ENCODE measurements at regions of chr14 and their contacts with region 1.

Region 1: GRCh38 chr14:39266871-39267591 is 33.3 kb downstream of the MIA2 start:
- DNase-seq: peak; percentile 85 to 90
- ATAC-seq: peak; percentile 90 to 94 (median 91)
- H3K4me3 ChIP-seq: peak overlapping the region; percentile 95
- H3K27ac ChIP-seq: peak overlapping the region; percentile 100
- H3K4me1 ChIP-seq: peaks cover 31% of the 10 kb centered on the region
- H3K27me3 ChIP-seq: no peaks in the 10 kb centered on the region
- CTCF ChIP-seq: no peak

Region 2: GRCh38 chr14:39174560-39175444 is 92.2 kb before region 1 on chr14 and contains the start of gene PNN:
- intact Hi-C with region 1: loop called (anchors 2 to 5 kb)
- DNase-seq: peak; percentile 96 to 98
- ATAC-seq: peak; percentile 93 to 97 (median 96)
- H3K4me3 ChIP-seq: peak within 1 kb of the TSS; percentile 90
- H3K27ac ChIP-seq: peak within 1 kb of the TSS; percentile 94
- H3K4me1 ChIP-seq: peaks cover 11% of the 10 kb centered on the region
- H3K27me3 ChIP-seq: no peaks in the 10 kb centered on the region
- CTCF ChIP-seq: no peak
- total RNA-seq, gene PNN: 20.1 to 29.5 (median 26.4) TPM

Region 3: DNA sequence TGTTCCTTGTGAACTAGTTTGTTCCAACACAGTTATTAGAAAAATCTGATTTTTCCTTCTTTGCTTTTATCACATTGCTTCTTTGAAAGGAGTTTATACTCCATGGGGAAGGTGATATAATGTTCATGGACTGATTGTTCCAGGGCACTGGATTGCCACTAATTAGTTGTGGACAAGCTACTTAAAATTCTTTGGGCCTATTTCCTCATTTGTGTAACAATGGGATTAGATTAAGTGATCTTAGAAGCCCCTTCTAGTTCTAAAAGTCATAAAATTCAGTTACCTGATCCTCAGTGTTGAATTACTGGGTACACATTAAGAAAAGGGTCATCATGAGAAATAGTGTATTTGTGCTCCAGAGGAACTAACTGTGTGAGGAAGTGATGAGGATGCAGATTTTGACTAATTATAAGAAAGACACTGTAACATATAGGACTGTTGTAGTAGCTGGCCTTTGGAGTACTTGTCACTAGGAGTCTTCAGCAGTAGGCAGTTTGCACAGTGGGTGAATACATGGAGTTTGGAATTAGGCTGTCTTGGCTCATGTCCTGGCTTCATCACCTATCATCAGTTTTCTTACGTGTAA is 48.9 kb after region 1 on chr14:
- intact Hi-C with region 1: no loop called
- DNase-seq: no peak
- ATAC-seq: peak in 1 of 4 donors; percentile 13
- H3K4me3 ChIP-seq: no peak overlapping the region
- H3K27ac ChIP-seq: no peak overlapping the region
- H3K4me1 ChIP-seq: no peaks in the 10 kb centered on the region
- H3K27me3 ChIP-seq: no peaks in the 10 kb centered on the region
- CTCF ChIP-seq: no peak

Region 4: GRCh38 chr14:39426605-39427004 is 159.6 kb after region 1 on chr14:
- intact Hi-C with region 1: loop called (anchors 5 to 10 kb)
- DNase-seq: no peak
- ATAC-seq: peak in 2 of 4 donors; percentile 41 to 47
- H3K4me3 ChIP-seq: no peak overlapping the region
- H3K27ac ChIP-seq: no peak overlapping the region
- H3K4me1 ChIP-seq: peaks cover 42% of the 10 kb centered on the region
- H3K27me3 ChIP-seq: no peaks in the 10 kb centered on the region
- CTCF ChIP-seq: peak; percentile 23

Region 5: DNA sequence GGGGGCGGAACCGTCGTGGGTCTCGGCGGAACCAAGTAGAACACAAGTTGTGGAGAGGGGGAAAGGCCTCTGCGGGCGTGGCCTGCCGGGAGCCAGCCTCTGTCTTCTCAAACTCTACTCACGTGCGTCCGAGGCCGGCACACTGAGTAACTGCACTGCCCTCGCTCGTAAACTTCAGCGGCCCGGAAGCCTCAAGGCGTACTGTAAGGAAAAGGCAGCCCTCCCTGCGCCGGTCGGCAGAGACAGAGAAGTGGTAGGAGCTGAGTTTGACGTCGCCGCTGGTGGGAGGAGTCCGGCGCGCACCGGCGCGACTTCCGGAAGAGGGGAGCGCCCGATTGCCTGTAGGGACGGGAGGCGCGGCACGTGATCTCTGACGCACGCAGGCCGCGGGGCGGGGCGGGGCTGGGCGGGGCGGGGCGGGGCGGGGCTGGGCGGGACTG is 165.2 kb after region 1 on chr14 and contains the start of gene FBXO33:
- intact Hi-C with region 1: loop called (anchors 5 to 10 kb)
- DNase-seq: peak; percentile 97 to 99
- ATAC-seq: peak; percentile 92 to 95 (median 94)
- H3K4me3 ChIP-seq: peak within 1 kb of the TSS; percentile 89
- H3K27ac ChIP-seq: peak within 1 kb of the TSS; percentile 92
- H3K4me1 ChIP-seq: peaks cover 28% of the 10 kb centered on the region
- H3K27me3 ChIP-seq: no peaks in the 10 kb centered on the region
- CTCF ChIP-seq: no peak
- total RNA-seq, gene FBXO33: 3.2 to 4.3 (median 3.6) TPM

Measured in psoas muscle (tissue), 8 donors.